Activated T-helper 2 cell treated with anti-CD3 and anti-CD28 coated beads, Interferon-gamma antibody, Interleukin-2, Interleukin-4, amounts not matched to agents 10 μg/mL and 5 μg/mL and 100 μg/mL, durations not matched to agents 14 hours and 24 hours and 36 hours (primary cell): ENCODE measurements at regions of chr22 and their contacts with region 1.

Region 1: DNA sequence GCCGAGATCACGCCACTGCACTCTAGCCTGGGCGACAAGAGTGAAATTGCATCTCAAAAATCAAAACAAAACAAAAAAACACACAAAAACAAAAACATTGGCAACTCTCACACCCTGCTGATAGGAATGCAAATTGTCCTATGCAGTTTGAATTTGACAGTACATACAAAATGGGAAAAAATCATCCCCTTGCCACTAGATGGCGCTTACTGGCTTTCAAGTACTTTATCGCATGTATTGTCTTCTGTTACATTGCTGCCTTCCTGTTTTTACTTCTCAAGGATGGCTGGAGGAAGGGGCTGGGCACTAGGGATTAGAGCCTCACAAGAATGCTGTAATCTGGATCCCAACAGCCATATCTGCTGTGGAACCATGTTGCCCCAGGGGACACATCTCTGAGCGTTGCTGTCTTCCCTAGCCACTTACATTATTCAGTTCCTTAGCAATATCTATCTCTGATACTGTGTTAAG is 59.4 kb upstream of the A4GALT start:
- DNase-seq: peak; percentile 30
- H3K4me3 Mint-ChIP-seq: no peak overlapping the region
- H3K27ac Mint-ChIP-seq: no peak overlapping the region
- H3K4me1 Mint-ChIP-seq: peaks cover 1% of the 10 kb centered on the region
- H3K27me3 Mint-ChIP-seq: no peaks in the 10 kb centered on the region

Region 2: DNA sequence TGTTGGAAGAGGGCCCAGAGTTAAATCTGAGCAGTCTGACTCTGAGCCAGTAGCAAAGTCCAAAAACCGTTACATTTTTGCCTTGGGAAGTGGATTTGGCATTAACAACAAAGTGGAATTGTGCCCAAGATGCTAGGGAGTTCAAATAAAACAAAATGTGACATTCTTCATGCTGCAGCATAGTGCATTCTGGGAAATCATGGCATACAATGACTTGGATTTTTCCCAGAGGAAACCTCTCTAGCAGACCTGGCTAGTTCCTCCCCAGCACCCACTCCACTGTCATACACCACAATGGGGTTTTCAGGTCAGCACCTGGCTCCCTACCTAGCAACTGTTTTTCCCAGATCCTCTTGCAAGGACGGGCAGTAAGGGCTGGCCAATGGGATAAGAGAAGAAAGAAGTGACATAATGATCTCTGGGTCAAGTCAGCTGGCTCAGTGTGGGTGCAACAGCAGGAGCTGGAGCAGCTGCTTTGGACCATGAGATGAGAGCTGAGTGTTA is 106.2 kb before region 1 on chr22:
- intact Hi-C with region 1: no loop called
- DNase-seq: no peak
- H3K4me3 Mint-ChIP-seq: no peak overlapping the region
- H3K27ac Mint-ChIP-seq: no peak overlapping the region
- H3K4me1 Mint-ChIP-seq: peaks cover 9% of the 10 kb centered on the region
- H3K27me3 Mint-ChIP-seq: no peaks in the 10 kb centered on the region

Region 3: DNA sequence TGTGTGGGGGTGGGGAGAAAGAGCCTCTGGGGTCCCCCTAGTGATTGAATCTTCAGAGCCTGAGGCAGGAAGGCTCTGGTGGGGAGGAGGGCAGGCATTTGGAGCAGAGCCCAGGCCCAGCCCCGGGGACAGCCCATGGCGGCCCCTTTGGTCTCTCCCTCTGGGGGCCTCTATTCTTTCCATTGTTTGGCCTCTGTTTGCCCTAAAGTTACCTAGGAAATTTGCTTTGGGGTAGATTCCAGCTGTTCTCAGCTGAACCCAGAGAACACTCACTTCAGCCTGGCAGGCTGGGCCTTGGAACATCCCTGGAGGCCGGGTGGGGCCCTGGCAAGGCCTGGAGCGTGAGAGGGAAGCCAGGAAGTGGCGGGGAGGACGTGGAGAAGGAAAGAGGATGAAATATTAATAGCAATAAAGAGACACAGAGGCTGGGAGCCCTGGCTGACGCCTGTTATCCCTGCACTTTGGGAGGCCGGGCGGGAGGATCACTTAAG is 36.6 kb before region 1 on chr22:
- intact Hi-C with region 1: no loop called
- DNase-seq: no peak
- H3K4me3 Mint-ChIP-seq: no peak overlapping the region
- H3K27ac Mint-ChIP-seq: no peak overlapping the region
- H3K4me1 Mint-ChIP-seq: no peaks in the 10 kb centered on the region
- H3K27me3 Mint-ChIP-seq: no peaks in the 10 kb centered on the region

Region 4: DNA sequence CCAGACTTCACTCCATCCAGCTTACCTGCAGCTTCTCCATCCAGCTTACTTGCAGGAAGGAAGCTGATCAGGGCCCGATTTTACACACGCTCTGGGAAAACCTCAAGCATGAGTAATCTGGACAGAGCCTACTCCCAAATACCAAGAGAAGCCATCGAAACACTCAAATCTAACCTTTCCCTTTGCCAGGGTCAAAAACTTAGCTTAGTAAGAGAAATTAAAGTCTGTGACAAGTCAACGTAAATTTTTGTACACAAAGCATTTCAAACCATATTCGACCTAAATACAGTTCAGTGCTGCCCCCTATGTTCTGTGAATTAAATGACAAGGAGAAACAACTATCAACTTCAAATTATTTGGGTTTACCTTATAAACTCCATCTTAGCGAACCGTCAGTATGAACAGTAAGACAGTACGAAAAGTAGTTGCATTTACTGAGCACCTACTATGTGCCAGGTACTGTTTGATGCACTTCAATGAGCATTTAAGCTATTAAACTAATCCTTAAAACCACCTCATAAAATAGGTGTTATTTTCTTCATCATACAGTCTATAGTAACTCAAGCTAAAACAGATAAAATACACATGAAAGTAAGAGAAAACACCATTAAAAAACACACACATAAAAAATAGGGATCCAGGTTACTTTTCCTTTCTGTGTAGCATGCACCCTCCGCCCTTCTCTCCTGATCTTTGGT is 40.1 kb after region 1 on chr22:
- intact Hi-C with region 1: loop called (anchors 1 kb)
- DNase-seq: no peak
- H3K4me3 Mint-ChIP-seq: no peak overlapping the region
- H3K27ac Mint-ChIP-seq: no peak overlapping the region
- H3K4me1 Mint-ChIP-seq: peaks cover 11% of the 10 kb centered on the region
- H3K27me3 Mint-ChIP-seq: no peaks in the 10 kb centered on the region

Region 5: GRCh38 chr22:43031617-43032016 is 251.5 kb after region 1 on chr22:
- intact Hi-C with region 1: loop called (anchors 5 kb)
- DNase-seq: no peak
- H3K4me3 Mint-ChIP-seq: no peak overlapping the region
- H3K27ac Mint-ChIP-seq: no peak overlapping the region
- H3K4me1 Mint-ChIP-seq: no peaks in the 10 kb centered on the region
- H3K27me3 Mint-ChIP-seq: no peaks in the 10 kb centered on the region